B cell (primary cell): ENCODE measurements at regions of chr9 and their contacts with region 1.

Region 1: DNA sequence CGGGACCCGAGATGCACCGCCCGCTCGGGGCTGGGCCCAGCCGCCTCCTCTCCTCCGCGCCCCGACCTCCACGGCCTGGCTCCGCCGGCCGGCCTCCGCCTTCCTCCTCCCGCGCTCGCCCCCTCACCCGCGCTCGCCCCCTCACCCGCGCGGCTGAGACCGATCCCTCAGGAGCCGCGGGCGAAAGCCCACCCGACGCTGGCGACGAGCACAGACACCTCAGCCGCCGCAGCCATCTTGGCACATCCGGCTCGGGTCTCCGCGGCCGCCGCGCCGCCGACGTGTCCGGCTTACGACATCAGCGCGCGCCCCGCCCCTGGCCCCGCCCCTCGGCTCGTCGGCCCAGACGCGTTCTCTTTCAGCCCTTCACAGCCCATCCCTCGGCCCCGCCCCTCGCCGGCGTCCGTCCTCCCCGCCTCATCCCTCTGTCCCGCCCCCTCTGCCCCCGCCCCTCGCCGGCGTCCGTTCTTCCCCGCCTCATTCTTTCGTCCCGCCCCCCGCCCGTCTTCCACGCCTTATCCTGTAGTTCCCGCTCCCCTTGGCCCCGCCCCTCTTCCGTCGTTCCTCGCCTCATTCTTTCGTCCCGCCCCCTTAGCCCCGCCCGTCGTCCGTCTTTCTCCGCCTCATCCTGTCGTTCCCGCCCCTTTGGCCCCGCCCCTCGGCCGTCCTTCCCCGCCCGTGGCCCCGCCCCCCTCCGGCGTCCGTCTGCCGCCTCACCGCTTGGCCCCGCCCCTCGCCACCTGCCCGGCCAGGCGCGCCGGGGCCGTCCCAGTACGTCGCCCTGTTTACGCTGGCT is at the start of gene SEC16A:
- DNase-seq: peak; percentile 99
- ATAC-seq: peak; percentile 75
- H3K4me3 ChIP-seq: peak within 1 kb of the TSS; percentile 63 to 96 (median 83)
- H3K4me3 Mint-ChIP-seq: peak within 1 kb of the TSS; percentile 97
- H3K27ac ChIP-seq: peak within 1 kb of the TSS; percentile 98 to 99
- H3K27ac Mint-ChIP-seq: peak within 1 kb of the TSS; percentile 99
- H3K4me1 ChIP-seq: peaks cover 25 to 26% of the 10 kb centered on the region in 2 donors
- H3K4me1 Mint-ChIP-seq: peaks cover 34% of the 10 kb centered on the region
- H3K27me3 ChIP-seq: peaks cover 0 to 4% (median 2%) of the 10 kb centered on the region in 4 experiments
- H3K27me3 Mint-ChIP-seq: no peaks in the 10 kb centered on the region
- CTCF ChIP-seq: no peak
- total RNA-seq, gene SEC16A: 73.4 and 79.5 TPM in 2 replicates

Region 2: DNA sequence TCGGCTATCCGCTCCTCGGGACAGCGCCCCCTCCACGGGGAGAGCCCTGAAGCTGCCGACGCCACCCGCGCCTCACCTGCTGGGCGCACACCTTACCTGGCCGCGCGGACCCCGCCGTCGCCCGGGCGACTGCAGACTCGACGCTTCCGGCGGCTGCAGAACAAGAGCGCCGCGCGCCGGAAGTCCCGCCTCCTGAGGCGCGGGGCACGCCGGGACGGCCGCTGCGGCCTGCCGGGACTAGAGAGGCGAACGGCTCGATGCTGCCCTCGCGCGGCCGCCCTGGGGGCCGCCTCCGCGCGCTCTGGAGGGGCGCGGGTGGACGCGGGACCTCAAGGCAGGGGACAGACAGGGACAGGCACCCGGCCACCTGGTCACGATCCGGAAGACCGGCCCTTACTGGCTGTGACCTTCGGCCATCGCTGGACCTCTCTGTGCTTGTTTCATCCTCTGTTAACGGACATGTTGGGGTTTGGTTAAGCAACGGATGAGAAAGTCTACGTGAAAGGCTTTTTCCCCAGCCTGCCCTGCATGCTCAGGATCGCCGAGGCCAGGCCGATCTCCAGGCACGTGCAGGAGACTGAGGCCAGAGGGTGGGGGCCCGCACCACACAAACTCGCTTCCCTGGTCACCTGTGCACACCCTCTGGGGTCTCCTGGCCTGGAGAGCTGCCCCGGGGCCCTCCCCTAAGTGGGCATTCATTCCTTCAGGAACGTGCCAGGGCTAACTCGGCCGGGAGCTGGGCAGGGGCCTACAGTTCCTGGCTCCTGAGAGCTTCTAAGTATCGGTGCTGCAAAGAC is 82.8 kb before region 1 on chr9 and contains the start of gene SNAPC4:
- CTCF ChIA-PET with region 1: no interaction called
- POLR2A ChIA-PET with region 1: no interaction called
- intact Hi-C with region 1: loop called (anchors 2 kb)
- DNase-seq: peak; percentile 92
- ATAC-seq: peak; percentile 91
- H3K4me3 ChIP-seq: peak within 1 kb of the TSS; percentile 30 to 83 (median 76)
- H3K4me3 Mint-ChIP-seq: peak within 1 kb of the TSS; percentile 89
- H3K27ac ChIP-seq: peak within 1 kb of the TSS in 1 of 2 donors; percentile 54
- H3K27ac Mint-ChIP-seq: peak within 1 kb of the TSS; percentile 70
- H3K4me1 ChIP-seq: peaks cover 37 to 41% of the 10 kb centered on the region in 2 donors
- H3K4me1 Mint-ChIP-seq: peaks cover 42% of the 10 kb centered on the region
- H3K27me3 ChIP-seq: no peaks in the 10 kb centered on the region
- H3K27me3 Mint-ChIP-seq: no peaks in the 10 kb centered on the region
- CTCF ChIP-seq: peak; percentile 94
- total RNA-seq, gene SNAPC4: 15.4 and 15.6 TPM in 2 replicates

Region 3: GRCh38 chr9:136439550-136440408 is 43.2 kb before region 1 on chr9 and contains the start of gene INPP5E:
- CTCF ChIA-PET with region 1: interaction called, 3 read pairs
- POLR2A ChIA-PET with region 1: no interaction called
- intact Hi-C with region 1: loop called (anchors 1 kb)
- DNase-seq: peak; percentile 90
- ATAC-seq: peak; percentile 87
- H3K4me3 ChIP-seq: peak within 1 kb of the TSS; percentile 31 to 79 (median 70)
- H3K4me3 Mint-ChIP-seq: peak within 1 kb of the TSS; percentile 84
- H3K27ac ChIP-seq: peak within 1 kb of the TSS in 1 of 2 donors; percentile 55
- H3K27ac Mint-ChIP-seq: peak within 1 kb of the TSS; percentile 77
- H3K4me1 ChIP-seq: peaks cover 21 to 28% of the 10 kb centered on the region in 2 donors
- H3K4me1 Mint-ChIP-seq: peaks cover 26% of the 10 kb centered on the region
- H3K27me3 ChIP-seq: no peaks in the 10 kb centered on the region
- H3K27me3 Mint-ChIP-seq: no peaks in the 10 kb centered on the region
- CTCF ChIP-seq: peak; percentile 81
- total RNA-seq, gene INPP5E: 33.1 and 35.3 TPM in 2 replicates

Region 4: DNA sequence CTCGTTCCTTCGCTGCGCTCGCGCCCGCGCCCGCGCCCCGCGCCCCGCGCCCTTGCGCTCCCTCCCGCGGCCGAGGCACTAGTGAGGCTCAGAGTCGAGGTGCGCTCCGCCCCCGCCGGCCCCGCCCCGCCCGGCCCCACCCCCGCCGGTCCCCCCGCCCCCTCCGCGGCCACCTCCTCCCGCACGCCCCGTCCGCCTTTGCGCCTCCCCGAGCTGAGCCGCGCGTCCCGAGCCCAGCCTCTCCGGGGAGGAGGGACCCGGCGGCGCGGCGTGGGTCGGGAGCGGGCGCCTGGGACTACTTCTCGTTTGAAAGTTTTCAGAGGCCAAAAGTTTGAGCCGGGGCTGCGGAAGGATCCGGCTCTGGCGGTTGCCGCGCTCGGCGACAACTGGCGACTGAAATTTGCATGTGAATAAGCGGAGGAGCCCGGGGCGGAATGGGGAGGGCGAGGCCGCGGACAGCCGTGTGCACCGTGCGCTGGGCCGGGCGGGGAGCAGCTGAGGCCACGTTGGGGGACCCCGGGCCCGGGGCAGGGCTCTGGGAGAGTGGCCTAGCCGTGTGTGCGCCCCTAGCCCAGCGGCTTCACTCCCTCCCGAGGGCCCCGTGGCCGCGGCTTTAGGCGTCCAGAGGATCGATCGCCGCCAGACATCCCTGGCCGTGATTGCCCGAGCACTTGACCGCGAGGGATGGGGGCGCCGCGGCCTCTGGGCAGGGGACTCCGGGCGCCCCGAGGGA is 63.1 kb after region 1 on chr9 and contains the start of gene NOTCH1:
- CTCF ChIA-PET with region 1: interaction called, 5 read pairs
- POLR2A ChIA-PET with region 1: interaction called, 3 read pairs
- intact Hi-C with region 1: loop called (anchors 2 kb)
- DNase-seq: peak; percentile 93
- ATAC-seq: peak; percentile 72
- H3K4me3 ChIP-seq: peak within 1 kb of the TSS; percentile 51 to 88 (median 70)
- H3K4me3 Mint-ChIP-seq: peak within 1 kb of the TSS; percentile 92
- H3K27ac ChIP-seq: peak within 1 kb of the TSS; percentile 33 to 75
- H3K27ac Mint-ChIP-seq: peak within 1 kb of the TSS; percentile 94
- H3K4me1 ChIP-seq: peaks cover 30 to 44% of the 10 kb centered on the region in 2 donors
- H3K4me1 Mint-ChIP-seq: peaks cover 34% of the 10 kb centered on the region
- H3K27me3 ChIP-seq: no peaks in the 10 kb centered on the region
- H3K27me3 Mint-ChIP-seq: no peaks in the 10 kb centered on the region
- CTCF ChIP-seq: no peak
- total RNA-seq, gene NOTCH1: 38.5 and 40.6 TPM in 2 replicates

Region 5: GRCh38 chr9:136644598-136645351 is 161.8 kb after region 1 on chr9:
- CTCF ChIA-PET with region 1: interaction called, 55 read pairs
- POLR2A ChIA-PET with region 1: no interaction called
- intact Hi-C with region 1: no loop called
- DNase-seq: peak; percentile 84
- ATAC-seq: peak; percentile 96
- H3K4me3 ChIP-seq: peak overlapping the region in 4 of 5 experiments; percentile 21 to 47 (median 29)
- H3K4me3 Mint-ChIP-seq: peak overlapping the region; percentile 16
- H3K27ac ChIP-seq: peak overlapping the region in 1 of 2 donors; percentile 18
- H3K27ac Mint-ChIP-seq: no peak overlapping the region
- H3K4me1 ChIP-seq: peaks cover 36% of the 10 kb centered on the region in 2 donors
- H3K4me1 Mint-ChIP-seq: peaks cover 22% of the 10 kb centered on the region
- H3K27me3 ChIP-seq: peaks cover 0 to 43% (median 21%) of the 10 kb centered on the region in 4 experiments
- H3K27me3 Mint-ChIP-seq: peaks cover 13% of the 10 kb centered on the region
- CTCF ChIP-seq: peak; percentile 94

Region 6: GRCh38 chr9:137086531-137087408 is 603.8 kb after region 1 on chr9 and contains the start of gene MAN1B1:
- CTCF ChIA-PET with region 1: no interaction called
- POLR2A ChIA-PET with region 1: no interaction called
- intact Hi-C with region 1: loop called (anchors 2 kb)
- DNase-seq: peak; percentile 100
- ATAC-seq: peak; percentile 79
- H3K4me3 ChIP-seq: peak within 1 kb of the TSS; percentile 42 to 83 (median 74)
- H3K4me3 Mint-ChIP-seq: peak within 1 kb of the TSS; percentile 97
- H3K27ac ChIP-seq: peak within 1 kb of the TSS; percentile 88 to 97
- H3K27ac Mint-ChIP-seq: peak within 1 kb of the TSS; percentile 98
- H3K4me1 ChIP-seq: peaks cover 18 to 41% of the 10 kb centered on the region in 2 donors
- H3K4me1 Mint-ChIP-seq: peaks cover 40% of the 10 kb centered on the region
- H3K27me3 ChIP-seq: no peaks in the 10 kb centered on the region
- H3K27me3 Mint-ChIP-seq: no peaks in the 10 kb centered on the region
- CTCF ChIP-seq: no peak
- total RNA-seq, gene MAN1B1: 68.4 and 80.9 TPM in 2 replicates